ENCODE measurements at regions of chr14 and their contacts with region 1.

Region 1: GRCh38 chr14:23186913-23187654 is 3.6 kb upstream of the SLC7A8 start:
- DNase-seq: no peak
- H3K4me3 ChIP-seq: no peak overlapping the region
- H3K27ac ChIP-seq: no peak overlapping the region
- H3K4me1 ChIP-seq: peaks cover 17% of the 10 kb centered on the region
- H3K27me3 ChIP-seq: peaks cover 10% of the 10 kb centered on the region
- CTCF ChIP-seq: peak; percentile 80

Region 2: GRCh38 chr14:22915886-22916521 is 271.1 kb before region 1 on chr14:
- intact Hi-C with region 1: no loop called
- DNase-seq: no peak
- H3K4me3 ChIP-seq: no peak overlapping the region
- H3K27ac ChIP-seq: peak overlapping the region; percentile 0
- H3K4me1 ChIP-seq: peaks cover 55% of the 10 kb centered on the region
- H3K27me3 ChIP-seq: no peaks in the 10 kb centered on the region
- CTCF ChIP-seq: no peak

Region 3: GRCh38 chr14:23120541-23121251 is 66.4 kb before region 1 on chr14:
- intact Hi-C with region 1: loop called (anchors 5 kb)
- DNase-seq: peak; percentile 87
- H3K4me3 ChIP-seq: no peak overlapping the region
- H3K27ac ChIP-seq: peak overlapping the region; percentile 47
- H3K4me1 ChIP-seq: peaks cover 22% of the 10 kb centered on the region
- H3K27me3 ChIP-seq: peaks cover 18% of the 10 kb centered on the region
- CTCF ChIP-seq: peak; percentile 100

Region 4: DNA sequence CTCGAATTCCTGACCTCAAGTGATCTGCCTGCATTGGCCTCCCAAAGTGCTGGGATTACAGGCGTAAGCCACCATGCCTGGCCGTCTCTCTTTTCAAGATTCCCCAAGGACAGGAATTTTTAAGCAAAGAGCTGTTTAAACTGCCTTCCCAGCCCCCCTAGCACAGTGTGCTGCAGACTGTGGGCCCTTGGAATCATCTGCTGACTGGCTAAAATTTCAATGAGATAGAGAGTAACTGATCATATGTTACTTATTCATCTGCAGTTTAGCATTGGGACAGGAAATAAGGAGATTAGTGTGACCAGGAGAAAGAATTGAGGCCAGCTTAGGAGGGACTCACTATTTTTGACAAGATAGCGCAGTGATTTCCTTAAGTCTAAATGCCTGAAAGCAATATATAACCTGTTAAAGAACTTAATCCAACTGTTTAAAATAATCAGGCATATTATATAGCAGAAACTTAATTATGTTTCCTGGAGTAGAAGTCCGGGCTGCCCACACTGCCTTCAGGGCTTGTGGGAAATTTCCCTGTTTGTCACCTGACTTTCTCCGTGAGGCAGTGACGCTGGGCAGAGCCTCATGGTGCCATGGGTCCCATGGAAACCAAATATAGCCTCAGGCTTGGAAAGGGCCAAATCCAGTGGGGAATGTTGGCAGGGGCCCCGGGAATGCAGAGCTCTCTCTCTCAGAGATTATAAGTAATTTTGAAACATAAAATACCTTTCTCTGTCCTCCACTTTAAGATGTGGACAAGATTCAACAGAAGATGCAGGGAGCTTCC is 45.2 kb before region 1 on chr14:
- intact Hi-C with region 1: no loop called
- DNase-seq: peak; percentile 79
- H3K4me3 ChIP-seq: no peak overlapping the region
- H3K27ac ChIP-seq: peak overlapping the region; percentile 87
- H3K4me1 ChIP-seq: peaks cover 62% of the 10 kb centered on the region
- H3K27me3 ChIP-seq: no peaks in the 10 kb centered on the region
- CTCF ChIP-seq: no peak